HAP-1 (cell line): ENCODE measurements at regions of chr19 and their contacts with region 1.

Region 1: DNA sequence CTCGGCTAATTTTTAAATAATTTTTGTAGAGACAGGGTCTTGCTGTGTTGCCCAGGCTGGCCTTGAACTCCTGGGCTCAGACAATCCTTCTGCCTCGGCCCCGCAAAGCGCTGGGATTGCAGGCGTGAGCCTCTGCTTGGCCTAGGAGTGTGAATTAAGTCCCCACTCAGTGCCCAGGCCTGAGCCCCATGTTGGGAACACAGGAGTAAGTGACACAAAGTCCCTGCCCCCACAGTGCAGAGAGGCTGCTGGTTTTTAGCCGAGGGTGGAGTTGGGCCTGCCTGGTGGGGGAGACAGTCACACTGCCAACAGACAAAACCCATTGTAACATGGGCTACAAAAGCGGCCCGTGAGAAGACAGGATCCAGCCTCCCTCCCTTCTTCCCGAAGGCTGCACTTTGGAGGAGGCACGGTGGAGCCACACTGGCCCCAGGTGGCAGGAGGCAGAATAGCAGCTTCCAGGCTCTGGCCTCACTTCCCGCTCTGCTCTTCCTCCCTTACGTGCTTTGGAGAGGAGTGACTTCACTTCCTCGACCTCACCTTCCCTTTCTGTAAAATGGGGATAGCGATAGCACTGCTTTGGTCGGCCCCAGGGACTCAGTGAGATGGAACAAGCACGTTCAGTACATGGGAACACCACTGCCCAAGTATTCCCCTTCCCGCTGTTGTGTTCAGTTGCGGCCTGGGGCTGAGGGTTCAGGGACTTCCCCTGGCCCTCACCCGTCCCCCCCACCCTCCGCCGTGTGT is 15.2 kb upstream of the EHD2 start:
- DNase-seq: peak; percentile 78 to 88
- H3K4me3 ChIP-seq: no peak overlapping the region
- H3K4me1 ChIP-seq: no peaks in the 10 kb centered on the region
- H3K27me3 ChIP-seq: no peaks in the 10 kb centered on the region

Region 2: GRCh38 chr19:47296036-47296435 is 402.0 kb before region 1 on chr19:
- in situ Hi-C with region 1: loop called (anchors 10 kb)
- DNase-seq: peak; percentile 79 to 93
- H3K4me3 ChIP-seq: no peak overlapping the region
- H3K4me1 ChIP-seq: no peaks in the 10 kb centered on the region
- H3K27me3 ChIP-seq: no peaks in the 10 kb centered on the region

Region 3: GRCh38 chr19:47436712-47437401 is 261.2 kb before region 1 on chr19:
- in situ Hi-C with region 1: loop called (anchors 5 kb)
- DNase-seq: peak; percentile 33 to 89
- H3K4me3 ChIP-seq: no peak overlapping the region
- H3K4me1 ChIP-seq: no peaks in the 10 kb centered on the region
- H3K27me3 ChIP-seq: peaks cover 17% of the 10 kb centered on the region

Region 4: DNA sequence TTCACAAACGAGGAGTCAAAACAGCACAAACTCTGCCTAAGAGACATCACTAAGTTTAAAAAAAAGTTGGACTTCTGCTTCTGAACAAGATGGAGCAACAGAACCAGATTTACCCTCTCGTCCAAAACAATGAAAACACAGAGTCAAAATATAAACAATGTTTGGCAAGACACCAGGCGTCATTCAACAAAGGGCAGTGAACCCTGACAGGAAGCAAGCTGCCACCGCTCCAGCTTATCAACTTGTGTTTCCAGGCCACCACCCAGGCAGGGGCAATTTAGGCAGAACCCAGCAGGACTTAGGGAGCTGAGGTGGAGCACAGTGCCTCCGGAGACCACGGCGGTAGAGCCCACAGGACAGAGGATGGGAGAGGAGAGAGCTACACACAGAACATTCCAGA is 174.6 kb before region 1 on chr19:
- in situ Hi-C with region 1: no loop called
- DNase-seq: no peak
- H3K4me3 ChIP-seq: no peak overlapping the region
- H3K4me1 ChIP-seq: peaks cover 6% of the 10 kb centered on the region
- H3K27me3 ChIP-seq: no peaks in the 10 kb centered on the region